Natural killer cell (primary cell): ENCODE measurements at regions of chr6 and their contacts with region 1.

Region 1: DNA sequence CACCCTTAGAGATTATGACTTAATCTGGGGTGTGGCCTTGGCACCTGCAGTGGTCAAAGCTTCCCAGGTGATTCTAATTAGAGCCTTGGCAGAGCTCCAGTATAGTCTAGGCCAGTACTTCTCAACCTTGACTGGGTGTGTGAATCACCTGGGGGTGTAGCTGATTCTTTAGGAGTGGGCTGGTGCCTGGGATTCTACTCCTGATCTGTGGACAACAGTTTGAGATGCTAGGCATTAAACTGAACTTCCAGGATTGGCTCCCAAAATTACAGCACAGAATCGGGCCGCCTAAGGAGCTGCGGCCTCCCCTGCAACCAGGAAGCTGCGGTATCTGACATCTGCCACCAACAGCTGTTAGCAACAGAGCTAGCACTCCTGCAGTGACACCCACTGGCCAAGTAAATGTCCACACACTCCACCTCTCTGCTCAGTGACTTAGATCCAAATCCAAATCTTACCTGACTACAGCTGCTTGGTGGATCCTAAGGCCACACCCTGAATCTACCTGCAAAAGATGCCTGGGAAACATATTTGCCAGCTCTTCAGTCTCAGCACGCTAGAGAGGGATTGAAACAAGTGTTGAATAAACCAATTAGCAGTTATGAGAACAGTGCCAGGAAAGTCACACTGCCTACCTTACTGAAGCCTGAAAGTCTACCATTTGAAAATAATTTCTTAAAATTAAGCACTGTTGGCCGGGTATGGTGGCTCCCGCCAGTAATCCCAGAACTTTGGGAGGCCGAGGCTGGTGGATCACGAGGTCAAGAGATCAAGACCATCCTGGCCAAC is 126.7 kb downstream of the UNC5CL start:
- DNase-seq: peak; percentile 18 to 50
- ATAC-seq: peak; percentile 62 to 91 (median 65)
- H3K4me3 ChIP-seq: no peak overlapping the region
- H3K4me3 Mint-ChIP-seq: no peak overlapping the region
- H3K27ac ChIP-seq: no peak overlapping the region
- H3K27ac Mint-ChIP-seq: no peak overlapping the region
- H3K4me1 ChIP-seq: peaks cover 4% of the 10 kb centered on the region
- H3K4me1 Mint-ChIP-seq: no peaks in the 10 kb centered on the region
- H3K27me3 ChIP-seq: peaks cover 2% of the 10 kb centered on the region
- H3K27me3 Mint-ChIP-seq: peaks cover 11 to 23% of the 10 kb centered on the region in 2 donors
- CTCF ChIP-seq: peak; percentile 22

Region 2: GRCh38 chr6:39865011-39865888 is 1047.1 kb before region 1 on chr6:
- intact Hi-C with region 1: loop called (anchors 2 kb)
- DNase-seq: peak; percentile 52 to 66
- ATAC-seq: peak in 1 of 3 donors; percentile 55
- H3K4me3 ChIP-seq: no peak overlapping the region
- H3K4me3 Mint-ChIP-seq: no peak overlapping the region
- H3K27ac ChIP-seq: no peak overlapping the region
- H3K27ac Mint-ChIP-seq: no peak overlapping the region
- H3K4me1 ChIP-seq: no peaks in the 10 kb centered on the region
- H3K4me1 Mint-ChIP-seq: no peaks in the 10 kb centered on the region
- H3K27me3 ChIP-seq: no peaks in the 10 kb centered on the region
- H3K27me3 Mint-ChIP-seq: peaks cover 10 to 26% of the 10 kb centered on the region in 2 donors
- CTCF ChIP-seq: peak; percentile 80

Region 3: DNA sequence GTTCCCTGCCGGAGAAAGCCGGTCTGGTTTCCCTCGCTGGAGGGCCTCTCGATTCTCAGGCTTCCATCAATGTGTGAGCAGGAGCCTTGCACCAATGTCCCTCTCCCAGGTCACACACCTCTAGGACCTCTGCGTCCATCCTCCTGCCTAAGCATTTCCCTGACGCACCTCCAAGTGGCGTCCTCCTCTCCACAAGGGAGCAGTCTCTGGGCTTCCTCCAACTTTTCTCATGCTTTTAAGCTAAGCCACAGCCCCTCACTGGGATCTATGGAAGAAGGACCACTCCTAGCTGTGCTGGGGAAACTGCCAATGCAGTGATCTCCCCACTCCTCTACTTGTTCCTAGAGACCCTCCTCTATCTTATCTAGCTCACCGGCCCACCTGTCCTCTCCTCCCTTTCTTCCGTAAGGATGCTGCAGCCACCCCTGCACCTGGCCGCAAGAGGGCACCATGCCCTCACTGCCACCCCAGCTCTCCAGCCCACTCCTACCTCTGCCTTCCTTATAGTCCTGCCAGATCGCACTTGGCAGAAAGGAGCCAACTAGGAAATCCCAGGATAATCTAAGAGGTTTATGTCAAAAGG is 583.9 kb before region 1 on chr6:
- intact Hi-C with region 1: loop called (anchors 2 kb)
- DNase-seq: peak; percentile 44 to 66
- ATAC-seq: peak; percentile 52 to 75 (median 71)
- H3K4me3 ChIP-seq: no peak overlapping the region
- H3K4me3 Mint-ChIP-seq: no peak overlapping the region
- H3K27ac ChIP-seq: no peak overlapping the region
- H3K27ac Mint-ChIP-seq: peak overlapping the region in 1 of 2 donors; percentile 67
- H3K4me1 ChIP-seq: no peaks in the 10 kb centered on the region
- H3K4me1 Mint-ChIP-seq: peaks cover 7 to 19% of the 10 kb centered on the region in 2 donors
- H3K27me3 ChIP-seq: no peaks in the 10 kb centered on the region
- H3K27me3 Mint-ChIP-seq: peaks cover 16 to 53% of the 10 kb centered on the region in 2 donors
- CTCF ChIP-seq: peak; percentile 72